ENCODE measurements at regions of chr1 and their contacts with region 1.

Region 1: DNA sequence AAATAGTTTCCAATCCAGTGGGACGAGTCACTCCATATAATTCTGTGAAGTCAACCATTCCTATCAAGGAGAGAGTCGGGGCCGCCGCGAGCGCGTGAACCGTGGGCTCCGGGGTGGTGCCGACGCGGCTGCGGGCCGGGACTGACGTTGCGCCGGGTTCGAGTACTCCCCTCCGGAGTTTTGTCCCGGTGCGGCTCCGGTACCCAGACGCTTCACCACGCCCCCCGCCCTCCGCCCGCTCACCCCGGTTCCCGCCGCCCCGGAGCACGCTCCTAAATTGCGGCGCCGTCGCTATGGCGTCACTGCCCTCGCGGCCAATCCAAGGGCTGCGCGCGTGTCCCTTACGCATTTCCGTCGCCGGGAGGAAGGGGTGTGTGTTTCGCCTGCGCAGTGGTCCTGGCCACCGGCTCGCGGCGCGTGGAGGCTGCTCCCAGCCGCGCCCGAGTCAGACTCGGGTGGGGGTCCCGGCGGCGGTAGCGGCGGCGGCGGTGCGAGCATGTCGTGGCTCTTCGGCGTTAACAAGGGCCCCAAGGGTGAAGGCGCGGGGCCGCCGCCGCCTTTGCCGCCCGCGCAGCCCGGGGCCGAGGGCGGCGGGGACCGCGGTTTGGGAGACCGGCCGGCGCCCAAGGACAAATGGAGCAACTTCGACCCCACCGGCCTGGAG is at the start of gene ATAD3B:
- DNase-seq: peak; percentile 90 to 91
- ATAC-seq: peak; percentile 96 to 99
- H3K4me3 ChIP-seq: peak within 1 kb of the TSS; percentile 63 to 86 (median 80)
- H3K27ac ChIP-seq: peak within 1 kb of the TSS; percentile 82 to 92 (median 86)
- H3K4me1 ChIP-seq: peaks cover 9 to 25% of the 10 kb centered on the region in 2 donors
- H3K27me3 ChIP-seq: no peaks in the 10 kb centered on the region
- CTCF ChIP-seq: peak in 1 of 5 experiments; percentile 11
- POLR2A ChIP-seq: peak; percentile 68 to 80
- total RNA-seq, gene ATAD3B: 3.5 to 7.1 (median 5.9) TPM

Region 2: DNA sequence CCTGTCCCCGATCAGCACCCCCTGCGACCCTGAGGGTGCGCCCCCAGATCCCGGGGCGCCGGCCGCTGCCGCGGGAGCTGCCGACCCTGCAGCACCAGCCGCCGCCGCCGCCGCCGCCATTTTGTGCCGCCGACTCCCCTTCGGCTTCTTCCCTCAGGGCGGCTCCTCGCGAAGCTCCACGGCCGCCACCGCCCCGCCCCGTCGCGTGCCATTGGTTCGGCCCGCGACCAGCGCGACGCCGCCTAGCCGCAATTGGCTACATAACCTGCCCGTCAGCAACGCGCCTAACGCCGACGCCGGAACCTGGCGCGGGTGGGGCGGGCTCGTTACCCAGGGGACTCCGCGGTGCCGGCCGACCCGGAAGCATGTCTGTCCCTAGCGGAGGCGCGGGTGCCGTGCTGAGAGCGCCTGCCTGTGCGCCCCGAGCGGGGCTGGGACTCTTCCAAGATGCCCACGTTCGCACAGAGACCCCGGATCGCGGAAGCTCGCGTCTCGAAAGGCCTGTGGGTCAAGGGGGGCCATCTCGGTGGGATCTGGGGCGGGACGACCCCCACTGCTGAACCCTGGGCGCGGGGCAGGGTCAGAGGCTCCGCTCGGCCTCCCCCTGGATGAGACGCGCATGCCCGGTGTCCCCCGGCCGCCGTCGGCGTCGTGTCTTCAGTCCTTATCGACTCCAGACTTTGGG is 72.2 kb before region 1 on chr1 and contains the start of gene CCNL2:
- in situ Hi-C with region 1: no loop called
- intact Hi-C with region 1: loop called (anchors 1 kb)
- DNase-seq: peak; percentile 96 to 98
- ATAC-seq: peak; percentile 89 to 93
- H3K4me3 ChIP-seq: peak within 1 kb of the TSS; percentile 65 to 98 (median 84)
- H3K27ac ChIP-seq: peak within 1 kb of the TSS; percentile 80 to 96 (median 92)
- H3K4me1 ChIP-seq: peaks cover 37 to 39% of the 10 kb centered on the region in 2 donors
- H3K27me3 ChIP-seq: no peaks in the 10 kb centered on the region
- CTCF ChIP-seq: peak; percentile 80 to 82 (median 82)
- POLR2A ChIP-seq: peak; percentile 81 to 89
- total RNA-seq, gene CCNL2: 35.0 to 91.1 (median 43.7) TPM

Region 3: GRCh38 chr1:1511533-1512285 is 40.2 kb after region 1 on chr1 and contains the start of gene ATAD3A:
- in situ Hi-C with region 1: no loop called
- intact Hi-C with region 1: loop called (anchors 1 kb)
- DNase-seq: peak; percentile 97 to 98
- ATAC-seq: peak; percentile 92 to 93
- H3K4me3 ChIP-seq: peak within 1 kb of the TSS; percentile 81 to 99 (median 94)
- H3K27ac ChIP-seq: peak within 1 kb of the TSS; percentile 93 to 100 (median 96)
- H3K4me1 ChIP-seq: peaks cover 6 to 13% of the 10 kb centered on the region in 2 donors
- H3K27me3 ChIP-seq: no peaks in the 10 kb centered on the region
- CTCF ChIP-seq: peak in 3 of 5 experiments; percentile 9 to 46 (median 27)
- POLR2A ChIP-seq: peak; percentile 84 to 91
- total RNA-seq, gene ATAD3A: 22.9 to 47.9 (median 35.6) TPM

Region 4: DNA sequence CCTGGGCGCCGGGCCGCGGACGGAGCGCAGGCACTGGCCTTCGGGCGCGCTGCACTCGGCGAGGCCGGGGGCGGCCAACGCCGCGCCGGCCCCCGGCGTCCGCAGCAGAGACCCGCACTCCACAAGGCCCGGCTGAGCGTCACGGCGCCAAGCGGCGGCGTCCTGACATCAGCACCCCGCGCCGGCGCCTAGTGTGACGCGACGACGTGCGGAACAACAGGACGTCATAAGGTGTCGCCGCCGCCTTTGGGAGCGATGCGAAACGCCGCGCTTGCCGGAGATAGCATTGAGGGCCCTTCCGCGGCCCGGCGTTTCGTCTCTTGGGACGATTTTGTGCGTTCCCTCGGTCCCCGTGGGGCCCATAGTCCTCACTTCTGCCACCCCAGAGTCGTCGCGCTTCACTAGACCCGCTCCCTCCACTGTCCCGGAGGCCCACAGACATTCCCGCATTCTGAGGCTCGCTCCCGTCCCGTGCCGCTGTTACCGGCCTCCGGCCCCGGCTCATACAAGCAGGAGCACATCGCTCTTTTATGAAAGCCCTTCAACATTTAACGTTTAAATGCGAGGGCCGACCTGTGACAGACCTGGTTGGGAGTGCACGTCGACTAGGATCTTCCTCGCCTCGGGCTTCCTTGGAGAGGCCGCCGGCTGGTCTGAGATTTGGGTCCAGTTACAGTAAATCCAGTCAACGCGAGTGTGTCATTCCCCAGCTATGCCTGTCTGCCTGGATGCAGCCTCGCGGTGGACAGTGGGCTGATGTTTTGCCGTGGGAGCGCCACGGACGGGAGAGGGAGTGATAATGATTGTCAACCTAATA is 103.4 kb after region 1 on chr1 and contains the start of gene SSU72:
- in situ Hi-C with region 1: no loop called
- intact Hi-C with region 1: loop called (anchors 1 kb)
- DNase-seq: peak; percentile 82 to 92
- ATAC-seq: peak; percentile 96
- H3K4me3 ChIP-seq: peak within 1 kb of the TSS; percentile 89 to 98 (median 96)
- H3K27ac ChIP-seq: peak within 1 kb of the TSS; percentile 97 to 99 (median 98)
- H3K4me1 ChIP-seq: peaks cover 33% of the 10 kb centered on the region in 2 donors
- H3K27me3 ChIP-seq: no peaks in the 10 kb centered on the region
- CTCF ChIP-seq: peak in 2 of 5 experiments; percentile 47 to 66
- POLR2A ChIP-seq: peak; percentile 91 to 96
- total RNA-seq, gene SSU72: 141 to 235 (median 208) TPM

Region 5: DNA sequence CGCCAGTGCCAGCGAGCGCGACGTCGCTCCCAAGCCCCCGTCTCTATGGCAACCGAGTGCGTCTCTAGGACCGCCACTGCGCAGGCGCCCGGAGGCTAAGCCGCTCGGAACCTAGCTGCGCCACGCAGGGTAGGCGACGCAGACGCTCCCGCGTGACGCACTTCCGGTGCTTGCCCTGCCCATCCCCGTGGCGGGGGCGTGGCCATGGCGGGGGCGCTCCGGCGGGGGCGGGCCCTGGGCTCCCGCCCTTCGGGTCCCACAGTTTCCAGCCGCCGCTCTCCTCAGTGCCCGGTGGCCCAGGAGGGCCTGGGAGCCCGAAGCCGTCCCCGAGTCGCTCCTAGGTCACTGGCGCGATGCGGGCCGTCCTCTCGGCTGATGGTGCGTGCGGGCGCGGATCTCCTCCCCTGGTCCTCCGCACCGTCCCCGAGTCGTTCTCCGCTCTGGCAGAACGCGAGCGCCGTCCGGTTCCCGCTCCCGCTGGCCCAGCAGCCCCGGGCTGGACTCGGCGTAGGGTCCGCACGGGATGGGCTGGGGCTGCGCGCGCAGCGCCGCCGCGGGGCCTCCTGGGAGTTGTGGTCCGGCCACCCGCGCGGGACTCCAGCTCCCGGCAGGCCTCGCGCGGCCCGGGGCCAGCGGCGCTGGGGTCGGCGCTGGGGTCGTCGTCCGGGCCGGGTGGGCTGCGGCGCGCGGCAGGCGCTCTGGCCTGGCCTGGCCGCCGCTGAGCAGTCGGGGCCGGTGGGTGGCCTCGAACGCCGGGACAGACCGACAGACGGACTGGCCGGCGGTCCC is 143.9 kb after region 1 on chr1 and contains the start of gene MIB2:
- in situ Hi-C with region 1: no loop called
- intact Hi-C with region 1: loop called (anchors 1 kb)
- DNase-seq: peak; percentile 91 to 92
- ATAC-seq: peak; percentile 83 to 89
- H3K4me3 ChIP-seq: peak within 1 kb of the TSS; percentile 82 to 99 (median 89)
- H3K27ac ChIP-seq: peak within 1 kb of the TSS; percentile 98 to 100 (median 100)
- H3K4me1 ChIP-seq: peaks cover 41 to 42% of the 10 kb centered on the region in 2 donors
- H3K27me3 ChIP-seq: no peaks in the 10 kb centered on the region
- CTCF ChIP-seq: peak in 1 of 5 experiments; percentile 16
- POLR2A ChIP-seq: peak; percentile 86 to 90
- total RNA-seq, gene MIB2: 66.4 to 154 (median 117) TPM